ENCODE measurements at regions of chr14 and their contacts with region 1.

Region 1: GRCh38 chr14:92121670-92122350 is at the starts of genes CPSF2 and NDUFB1:
- DNase-seq: peak in 1 of 2 experiments; percentile 93
- H3K4me3 ChIP-seq: peak within 1 kb of the TSS; percentile 87 to 100 (median 98)
- H3K27ac ChIP-seq: peak within 1 kb of the TSS; percentile 97
- H3K4me1 ChIP-seq: peaks cover 0 to 3% (median 0%) of the 10 kb centered on the region in 4 experiments; a peak in 2 of 7 replicates
- H3K27me3 ChIP-seq: no peaks in the 10 kb centered on the region
- CTCF ChIP-seq: no peak
- EP300 ChIP-seq: peak in 1 of 2 experiments; percentile 98; a peak in 2 of 3 replicates
- POLR2A ChIP-seq: peak; percentile 87 to 96
- RAD21 ChIP-seq: no peak
- total RNA-seq, gene CPSF2: 130 and 141 TPM in 2 replicates
- total RNA-seq, gene NDUFB1: 124 and 127 TPM in 2 replicates

Region 2: GRCh38 chr14:92106143-92106926 is 15.5 kb before region 1 on chr14 and contains the start of gene ATXN3:
- CTCF ChIA-PET with region 1: interaction called, 45 read pairs
- POLR2A ChIA-PET with region 1: interaction called, 66 read pairs
- DNase-seq: peak; percentile 86 to 91
- H3K4me3 ChIP-seq: peak within 1 kb of the TSS; percentile 69 to 97 (median 86)
- H3K27ac ChIP-seq: peak within 1 kb of the TSS; percentile 37; the same call in 1 of the 2 replicates
- H3K4me1 ChIP-seq: peaks cover 4 to 7% (median 6%) of the 10 kb centered on the region in 4 experiments; a peak in 6 of 7 replicates
- H3K27me3 ChIP-seq: no peaks in the 10 kb centered on the region
- CTCF ChIP-seq: peak; percentile 66 to 84 (median 82)
- EP300 ChIP-seq: peak in 1 of 2 experiments; percentile 13; a peak in 1 of 3 replicates
- POLR2A ChIP-seq: peak in 1 of 2 experiments; percentile 89; a peak in 2 of 3 replicates
- RAD21 ChIP-seq: peak; percentile 10 to 27; a peak in 2 of 4 replicates
- total RNA-seq, gene ATXN3: 31.7 and 37.2 TPM in 2 replicates

Region 3: DNA sequence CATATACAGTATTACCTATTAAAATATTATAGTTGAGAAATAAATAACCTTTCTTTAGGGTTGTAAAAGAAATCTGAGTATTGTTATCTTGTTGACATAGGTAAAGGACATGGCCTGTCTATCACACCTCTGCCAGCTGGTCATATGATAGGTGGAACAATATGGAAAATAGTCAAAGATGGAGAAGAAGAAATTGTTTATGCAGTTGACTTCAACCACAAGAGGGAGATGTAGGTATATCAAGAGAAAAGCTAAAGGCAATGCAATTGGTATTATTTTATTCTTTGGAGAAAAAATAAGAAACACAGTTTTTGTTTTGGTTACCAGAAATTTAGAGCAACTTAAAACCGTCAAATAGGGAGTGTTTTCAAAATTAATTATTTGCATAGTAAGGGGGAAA is 13.5 kb after region 1 on chr14:
- CTCF ChIA-PET with region 1: interaction called, 5 read pairs
- POLR2A ChIA-PET with region 1: interaction called, 36 read pairs
- DNase-seq: no peak
- H3K4me3 ChIP-seq: no peak overlapping the region
- H3K27ac ChIP-seq: no peak overlapping the region
- H3K4me1 ChIP-seq: no peaks in the 10 kb centered on the region
- H3K27me3 ChIP-seq: no peaks in the 10 kb centered on the region
- CTCF ChIP-seq: peak in 1 of 3 experiments; percentile 30; a peak in 1 of 4 replicates
- EP300 ChIP-seq: no peak
- POLR2A ChIP-seq: no peak
- RAD21 ChIP-seq: peak in 1 of 2 experiments; percentile 35; a peak in 3 of 4 replicates

Region 4: GRCh38 chr14:92185559-92185958 is 63.7 kb after region 1 on chr14:
- CTCF ChIA-PET with region 1: no interaction called
- POLR2A ChIA-PET with region 1: no interaction called
- DNase-seq: no peak
- H3K4me3 ChIP-seq: no peak overlapping the region
- H3K27ac ChIP-seq: no peak overlapping the region
- H3K4me1 ChIP-seq: no peaks in the 10 kb centered on the region
- H3K27me3 ChIP-seq: no peaks in the 10 kb centered on the region
- CTCF ChIP-seq: no peak
- EP300 ChIP-seq: no peak
- POLR2A ChIP-seq: no peak
- RAD21 ChIP-seq: no peak

Region 5: GRCh38 chr14:92224358-92224954 is 102.6 kb after region 1 on chr14:
- CTCF ChIA-PET with region 1: no interaction called
- POLR2A ChIA-PET with region 1: no interaction called
- DNase-seq: no peak
- H3K4me3 ChIP-seq: no peak overlapping the region
- H3K27ac ChIP-seq: no peak overlapping the region
- H3K4me1 ChIP-seq: no peaks in the 10 kb centered on the region
- H3K27me3 ChIP-seq: no peaks in the 10 kb centered on the region
- CTCF ChIP-seq: no peak
- EP300 ChIP-seq: no peak
- POLR2A ChIP-seq: no peak
- RAD21 ChIP-seq: no peak

Measured in H1 (cell line).